ENCODE measurements at regions of chr2 and their contacts with region 1.

Region 1: DNA sequence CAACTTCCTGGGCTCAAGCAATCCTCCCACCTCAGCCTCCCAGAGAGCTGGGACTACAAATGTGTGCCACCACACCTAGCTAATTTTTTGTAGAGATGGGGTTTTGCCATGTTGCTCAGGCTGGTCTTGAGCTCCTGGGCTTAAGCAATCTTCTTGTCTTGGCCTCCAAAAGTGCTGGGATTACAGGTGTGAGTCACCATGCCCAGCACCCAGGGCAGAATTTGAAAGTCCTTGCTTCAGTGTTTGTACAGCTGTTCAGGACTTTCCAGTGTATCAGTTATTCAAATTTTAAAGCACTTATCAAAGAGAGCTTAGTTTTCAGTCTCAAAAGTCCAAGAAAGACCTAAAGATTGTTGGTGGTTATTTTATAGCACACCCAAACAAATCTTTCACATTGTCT is 43.6 kb upstream of the VPS54 start:
- DNase-seq: peak; percentile 36
- H3K4me3 Mint-ChIP-seq: no peak overlapping the region
- H3K27ac Mint-ChIP-seq: peak overlapping the region; percentile 23
- H3K4me1 Mint-ChIP-seq: peaks cover 36% of the 10 kb centered on the region
- H3K27me3 Mint-ChIP-seq: no peaks in the 10 kb centered on the region

Region 2: DNA sequence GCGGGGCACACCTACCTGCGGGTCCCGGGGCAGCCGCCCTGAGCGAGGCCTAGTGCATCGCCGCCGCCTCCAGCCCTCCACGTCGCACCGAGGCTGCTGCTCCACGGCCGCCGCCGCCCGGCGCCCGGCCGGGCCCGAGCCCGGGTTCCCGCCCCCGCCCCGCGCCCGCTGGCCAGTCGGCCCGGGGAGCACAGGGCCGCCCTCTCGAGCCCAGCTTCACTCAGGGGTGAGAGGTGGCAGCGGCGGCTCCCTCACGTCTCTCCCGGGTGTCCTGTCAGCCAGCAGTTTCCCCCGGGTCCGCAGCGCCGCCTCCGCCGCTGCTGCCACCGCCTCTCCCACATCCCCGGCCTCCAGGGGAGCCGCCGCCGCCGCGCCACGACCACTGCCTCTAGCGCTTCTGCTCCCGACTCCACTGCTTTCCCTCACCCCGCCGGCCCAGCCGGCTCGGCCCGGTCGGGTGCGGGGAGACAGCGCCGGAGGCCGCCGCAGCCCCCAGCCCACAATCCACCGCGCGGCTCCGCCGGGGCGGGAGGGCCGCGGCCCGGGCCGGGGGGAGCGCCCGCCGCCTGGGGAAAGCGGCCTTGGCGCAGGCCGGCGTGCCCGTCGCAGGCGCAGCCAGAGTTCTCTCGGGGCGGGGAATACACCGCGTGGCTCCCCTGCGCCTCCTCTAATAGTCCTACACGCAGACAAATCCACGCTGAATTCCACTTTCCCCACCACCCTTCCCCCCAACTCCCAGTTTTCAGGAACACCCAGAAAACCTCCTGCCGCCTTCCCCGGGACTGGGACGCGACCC is 43.7 kb before region 1 on chr2 and contains the start of gene VPS54:
- CTCF ChIA-PET with region 1: interaction called, 4 read pairs
- intact Hi-C with region 1: loop called (anchors 1 kb)
- DNase-seq: peak; percentile 52
- H3K4me3 Mint-ChIP-seq: peak within 1 kb of the TSS; percentile 95
- H3K27ac Mint-ChIP-seq: peak within 1 kb of the TSS; percentile 95
- H3K4me1 Mint-ChIP-seq: peaks cover 34% of the 10 kb centered on the region
- H3K27me3 Mint-ChIP-seq: no peaks in the 10 kb centered on the region
- total RNA-seq, gene VPS54: 7.0 to 7.7 TPM

Region 3: GRCh38 chr2:64086347-64087082 is 23.7 kb after region 1 on chr2:
- CTCF ChIA-PET with region 1: no interaction called
- intact Hi-C with region 1: loop called (anchors 1 kb)
- DNase-seq: no peak
- H3K4me3 Mint-ChIP-seq: no peak overlapping the region
- H3K27ac Mint-ChIP-seq: no peak overlapping the region
- H3K4me1 Mint-ChIP-seq: peaks cover 16% of the 10 kb centered on the region
- H3K27me3 Mint-ChIP-seq: no peaks in the 10 kb centered on the region

Region 4: GRCh38 chr2:64101141-64101591 is 38.3 kb after region 1 on chr2:
- CTCF ChIA-PET with region 1: no interaction called
- intact Hi-C with region 1: loop called (anchors 1 kb)
- DNase-seq: no peak
- H3K4me3 Mint-ChIP-seq: no peak overlapping the region
- H3K27ac Mint-ChIP-seq: peak overlapping the region; percentile 76
- H3K4me1 Mint-ChIP-seq: peaks cover 51% of the 10 kb centered on the region
- H3K27me3 Mint-ChIP-seq: no peaks in the 10 kb centered on the region

Region 5: GRCh38 chr2:64133828-64134227 is 71.0 kb after region 1 on chr2:
- CTCF ChIA-PET with region 1: no interaction called
- intact Hi-C with region 1: loop called (anchors 2 kb)
- DNase-seq: no peak
- H3K4me3 Mint-ChIP-seq: no peak overlapping the region
- H3K27ac Mint-ChIP-seq: peak overlapping the region; percentile 72
- H3K4me1 Mint-ChIP-seq: peaks cover 88% of the 10 kb centered on the region
- H3K27me3 Mint-ChIP-seq: no peaks in the 10 kb centered on the region

Region 6: DNA sequence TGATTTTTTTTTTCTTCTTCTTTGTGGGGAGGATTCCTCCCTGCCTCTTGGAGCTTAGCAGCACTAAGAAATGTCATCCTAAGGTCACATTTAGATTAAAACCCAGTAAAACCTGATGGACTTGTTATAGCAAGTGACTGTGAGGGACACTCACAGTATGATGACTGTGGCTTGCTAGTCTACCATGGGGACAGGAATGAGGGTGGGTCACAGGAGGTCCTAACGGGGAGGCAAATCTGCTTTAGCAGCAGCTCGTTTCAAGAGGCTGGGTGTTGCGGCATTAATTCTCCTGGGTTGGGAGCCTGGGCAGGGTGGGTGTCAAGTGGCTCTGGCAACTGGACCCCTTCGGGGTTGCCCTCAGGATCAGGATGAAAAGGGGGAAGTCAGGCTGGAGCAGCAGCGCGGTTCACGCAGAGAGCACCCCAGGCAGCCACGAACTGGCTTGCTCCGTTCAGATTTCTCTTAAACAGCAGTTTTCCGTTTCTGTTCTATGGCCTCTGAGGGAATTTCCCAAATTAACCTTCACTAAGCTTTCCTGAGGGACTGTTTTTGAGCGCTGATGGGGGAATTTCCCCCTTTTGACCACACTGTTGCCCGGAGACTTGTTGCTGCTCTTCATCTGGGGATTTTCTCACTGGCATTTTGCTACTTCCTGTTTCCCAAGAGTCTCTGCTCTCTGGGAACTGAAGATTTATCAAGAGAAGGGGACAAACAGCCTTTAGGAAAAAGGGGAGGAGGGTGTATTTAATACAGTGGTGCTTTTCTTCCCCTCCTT is 141.2 kb after region 1 on chr2:
- CTCF ChIA-PET with region 1: no interaction called
- intact Hi-C with region 1: loop called (anchors 2 kb)
- DNase-seq: peak; percentile 75
- H3K4me3 Mint-ChIP-seq: peak overlapping the region; percentile 65
- H3K27ac Mint-ChIP-seq: peak overlapping the region; percentile 90
- H3K4me1 Mint-ChIP-seq: peaks cover 84% of the 10 kb centered on the region
- H3K27me3 Mint-ChIP-seq: no peaks in the 10 kb centered on the region

Region 7: DNA sequence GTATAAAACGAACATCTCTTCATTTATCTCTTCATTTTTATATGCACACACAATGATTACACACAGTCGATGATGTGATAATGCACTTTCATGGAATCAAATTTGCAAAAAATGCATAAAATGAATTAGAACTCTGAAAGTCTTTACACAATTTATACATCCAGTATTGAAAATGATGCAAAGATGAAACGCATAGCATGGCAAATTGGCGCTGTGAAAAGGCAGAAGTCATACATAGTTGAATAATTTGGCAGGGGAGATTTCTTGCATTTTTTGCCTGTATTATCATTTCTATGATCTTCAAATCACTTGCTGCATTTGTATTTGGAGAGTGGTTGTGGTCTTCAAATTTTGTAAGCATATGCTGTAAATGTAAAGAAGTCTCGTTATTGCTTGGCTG is 240.4 kb after region 1 on chr2:
- CTCF ChIA-PET with region 1: no interaction called
- intact Hi-C with region 1: no loop called
- DNase-seq: no peak
- H3K4me3 Mint-ChIP-seq: no peak overlapping the region
- H3K27ac Mint-ChIP-seq: no peak overlapping the region
- H3K4me1 Mint-ChIP-seq: no peaks in the 10 kb centered on the region
- H3K27me3 Mint-ChIP-seq: peaks cover 1% of the 10 kb centered on the region

Measured in activated naive CD4-positive, alpha-beta T cell treated with anti-CD3 and anti-CD28 coated beads for 36 hours (primary cell).